ENCODE measurements at regions of chr5 and their contacts with region 1.

Region 1: GRCh38 chr5:40410231-40410861 is 269.4 kb upstream of the PTGER4 start:
- DNase-seq: peak; percentile 35 to 95 (median 78)
- ATAC-seq: peak; percentile 86 to 91 (median 89)
- H3K4me3 ChIP-seq: peak overlapping the region; percentile 31 to 47
- H3K4me3 Mint-ChIP-seq: peak overlapping the region; percentile 66 to 80 (median 76)
- H3K27ac ChIP-seq: peak overlapping the region; percentile 97
- H3K27ac Mint-ChIP-seq: peak overlapping the region; percentile 98 to 100
- H3K4me1 ChIP-seq: peaks cover 49 to 53% of the 10 kb centered on the region in 2 experiments
- H3K4me1 Mint-ChIP-seq: peaks cover 64 to 67% (median 65%) of the 10 kb centered on the region in 3 donors
- H3K27me3 ChIP-seq: no peaks in the 10 kb centered on the region
- H3K27me3 Mint-ChIP-seq: no peaks in the 10 kb centered on the region

Region 2: DNA sequence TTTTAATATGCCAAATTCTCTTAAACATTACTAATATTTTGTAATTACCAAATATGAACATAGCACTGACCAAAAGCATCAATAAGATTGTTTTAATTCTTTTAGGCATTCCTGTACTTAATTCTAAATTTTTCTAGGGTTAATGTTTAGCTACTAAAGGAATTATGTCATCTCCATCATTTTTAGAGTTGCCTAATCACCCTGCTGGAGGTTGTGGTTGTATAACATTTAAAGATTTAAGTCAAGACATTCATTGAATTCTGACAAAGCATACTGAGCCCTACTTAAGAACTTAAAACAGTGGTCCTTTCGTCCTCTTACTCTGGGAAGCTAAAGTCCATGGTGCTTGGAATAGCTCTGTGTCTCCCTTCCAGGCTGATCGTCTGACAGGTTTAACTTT is 957.5 kb before region 1 on chr5:
- CTCF ChIA-PET with region 1: no interaction called
- POLR2A ChIA-PET with region 1: no interaction called
- DNase-seq: no peak
- ATAC-seq: no peak
- H3K4me3 ChIP-seq: no peak overlapping the region
- H3K4me3 Mint-ChIP-seq: no peak overlapping the region
- H3K27ac ChIP-seq: no peak overlapping the region
- H3K27ac Mint-ChIP-seq: no peak overlapping the region
- H3K4me1 ChIP-seq: no peaks in the 10 kb centered on the region
- H3K4me1 Mint-ChIP-seq: no peaks in the 10 kb centered on the region
- H3K27me3 ChIP-seq: no peaks in the 10 kb centered on the region
- H3K27me3 Mint-ChIP-seq: peaks cover 22 to 24% of the 10 kb centered on the region in 2 donors

Region 3: GRCh38 chr5:39671561-39671961 is 738.8 kb before region 1 on chr5:
- CTCF ChIA-PET with region 1: no interaction called
- POLR2A ChIA-PET with region 1: no interaction called
- DNase-seq: no peak
- ATAC-seq: no peak
- H3K4me3 ChIP-seq: no peak overlapping the region
- H3K4me3 Mint-ChIP-seq: no peak overlapping the region
- H3K27ac ChIP-seq: no peak overlapping the region
- H3K27ac Mint-ChIP-seq: no peak overlapping the region
- H3K4me1 ChIP-seq: no peaks in the 10 kb centered on the region
- H3K4me1 Mint-ChIP-seq: no peaks in the 10 kb centered on the region
- H3K27me3 ChIP-seq: no peaks in the 10 kb centered on the region
- H3K27me3 Mint-ChIP-seq: peaks cover 0 to 3% of the 10 kb centered on the region in 2 donors

Region 4: DNA sequence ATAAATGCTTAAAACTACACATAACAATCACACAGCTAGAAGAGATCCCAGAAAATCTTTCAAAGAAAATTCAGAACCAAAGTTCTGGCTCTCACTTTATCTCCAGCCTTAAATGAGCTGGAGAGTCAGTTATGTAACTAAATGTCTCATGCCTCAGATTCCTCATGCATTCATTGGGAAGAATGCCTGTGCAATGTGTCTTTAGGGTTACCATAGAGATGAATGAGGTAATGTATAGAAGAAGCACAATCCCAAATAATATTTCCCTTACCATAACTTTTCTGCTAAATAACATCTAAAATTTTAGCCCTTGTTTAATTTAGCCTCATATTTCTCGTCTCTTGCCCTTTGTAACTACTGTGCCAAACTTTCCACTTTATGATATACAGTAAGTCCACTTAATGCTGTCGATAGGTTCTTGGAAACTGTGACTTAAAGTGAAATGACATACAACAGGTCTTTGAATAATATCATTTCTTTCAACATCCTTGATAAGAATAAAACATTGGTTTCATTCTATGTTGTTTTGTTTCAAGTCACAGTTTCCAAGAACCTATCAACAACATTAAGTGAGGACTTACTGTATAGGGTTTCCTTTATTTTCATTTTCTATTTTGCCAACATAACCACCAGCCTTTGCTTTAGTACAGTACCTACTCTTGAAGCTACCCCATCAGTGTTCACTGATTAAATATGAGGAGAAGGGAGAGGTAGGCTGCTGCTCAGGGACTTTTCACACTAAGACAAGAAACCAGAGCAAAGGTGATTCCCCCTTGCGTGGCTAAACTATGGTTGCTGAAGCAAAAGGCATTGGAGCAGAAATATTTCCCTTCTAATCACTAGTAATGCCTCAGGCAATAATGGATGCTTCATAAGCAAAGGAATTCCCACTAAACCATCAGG is 26.3 kb before region 1 on chr5:
- CTCF ChIA-PET with region 1: interaction called, 4 to 5 read pairs
- POLR2A ChIA-PET with region 1: interaction called, 4 to 15 read pairs
- DNase-seq: peak in 4 of 35 experiments; percentile 3 to 63 (median 8)
- ATAC-seq: peak; percentile 33 to 76 (median 50)
- H3K4me3 ChIP-seq: no peak overlapping the region
- H3K4me3 Mint-ChIP-seq: peak overlapping the region; percentile 14 to 51 (median 26)
- H3K27ac ChIP-seq: peak overlapping the region; percentile 45
- H3K27ac Mint-ChIP-seq: peak overlapping the region; percentile 68 to 93
- H3K4me1 ChIP-seq: peaks cover 26 to 32% of the 10 kb centered on the region in 2 experiments
- H3K4me1 Mint-ChIP-seq: peaks cover 42 to 78% (median 69%) of the 10 kb centered on the region in 3 donors
- H3K27me3 ChIP-seq: no peaks in the 10 kb centered on the region
- H3K27me3 Mint-ChIP-seq: no peaks in the 10 kb centered on the region

Region 5: DNA sequence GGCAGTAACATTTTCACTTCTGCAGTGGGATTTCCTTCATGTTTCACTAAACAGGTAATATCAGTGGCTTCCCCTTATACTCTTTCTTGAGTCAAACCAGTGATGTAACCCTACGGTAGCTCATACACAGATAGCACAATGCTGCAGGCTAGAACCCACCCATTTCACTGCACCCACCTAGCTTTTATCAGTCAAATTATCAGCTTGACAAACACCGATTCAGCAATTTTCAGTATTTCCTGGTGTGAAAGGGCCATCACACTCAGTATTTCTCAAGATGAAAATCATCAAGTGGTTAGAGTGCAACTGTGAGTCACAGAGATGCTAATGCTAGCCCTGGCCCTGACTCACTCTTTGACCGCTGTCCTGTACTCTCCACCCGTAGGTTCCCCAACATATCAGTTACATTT is 27.1 kb after region 1 on chr5:
- CTCF ChIA-PET with region 1: interaction called, 4 to 30 read pairs
- POLR2A ChIA-PET with region 1: interaction called, 8 to 40 read pairs
- DNase-seq: peak in 14 of 35 experiments; percentile 10 to 67 (median 23)
- ATAC-seq: peak in 3 of 4 experiments; percentile 25 to 38 (median 35)
- H3K4me3 ChIP-seq: no peak overlapping the region
- H3K4me3 Mint-ChIP-seq: no peak overlapping the region
- H3K27ac ChIP-seq: peak overlapping the region; percentile 94
- H3K27ac Mint-ChIP-seq: peak overlapping the region; percentile 95 to 97
- H3K4me1 ChIP-seq: peaks cover 31 to 38% of the 10 kb centered on the region in 2 experiments
- H3K4me1 Mint-ChIP-seq: peaks cover 58 to 65% (median 64%) of the 10 kb centered on the region in 3 donors
- H3K27me3 ChIP-seq: no peaks in the 10 kb centered on the region
- H3K27me3 Mint-ChIP-seq: no peaks in the 10 kb centered on the region

Region 6: GRCh38 chr5:40679155-40679913 is 269.0 kb after region 1 on chr5:
- CTCF ChIA-PET with region 1: interaction called in 1 of 2 experiments, 4 read pairs
- POLR2A ChIA-PET with region 1: interaction called, 8 to 52 read pairs
- DNase-seq: peak; percentile 78 to 94 (median 85)
- ATAC-seq: peak; percentile 75 to 78 (median 76)
- H3K4me3 ChIP-seq: peak overlapping the region; percentile 90 to 95
- H3K4me3 Mint-ChIP-seq: peak overlapping the region; percentile 92 to 100 (median 99)
- H3K27ac ChIP-seq: peak overlapping the region; percentile 96
- H3K27ac Mint-ChIP-seq: peak overlapping the region; percentile 95 to 99
- H3K4me1 ChIP-seq: peaks cover 30 to 46% of the 10 kb centered on the region in 2 experiments
- H3K4me1 Mint-ChIP-seq: peaks cover 53 to 82% (median 62%) of the 10 kb centered on the region in 3 donors
- H3K27me3 ChIP-seq: no peaks in the 10 kb centered on the region
- H3K27me3 Mint-ChIP-seq: no peaks in the 10 kb centered on the region

Measured in T-cell (primary cell).